ENCODE measurements at regions of chr3 and their contacts with region 1.

Region 1: GRCh38 chr3:100717637-100718487 is 8.6 kb downstream of the TFG start:
- DNase-seq: no peak
- ATAC-seq: no peak
- H3K4me3 Mint-ChIP-seq: no peak overlapping the region
- H3K27ac Mint-ChIP-seq: no peak overlapping the region
- H3K4me1 Mint-ChIP-seq: peaks cover 35% of the 10 kb centered on the region
- H3K27me3 Mint-ChIP-seq: no peaks in the 10 kb centered on the region

Region 2: GRCh38 chr3:100737334-100737733 is 19.5 kb after region 1 on chr3:
- CTCF ChIA-PET with region 1: interaction called, 3 read pairs
- POLR2A ChIA-PET with region 1: no interaction called
- intact Hi-C with region 1: loop called in 1 of 2 experiments (anchors 2 kb)
- DNase-seq: no peak
- ATAC-seq: no peak
- H3K4me3 Mint-ChIP-seq: no peak overlapping the region
- H3K27ac Mint-ChIP-seq: no peak overlapping the region
- H3K4me1 Mint-ChIP-seq: peaks cover 8% of the 10 kb centered on the region
- H3K27me3 Mint-ChIP-seq: no peaks in the 10 kb centered on the region

Region 3: DNA sequence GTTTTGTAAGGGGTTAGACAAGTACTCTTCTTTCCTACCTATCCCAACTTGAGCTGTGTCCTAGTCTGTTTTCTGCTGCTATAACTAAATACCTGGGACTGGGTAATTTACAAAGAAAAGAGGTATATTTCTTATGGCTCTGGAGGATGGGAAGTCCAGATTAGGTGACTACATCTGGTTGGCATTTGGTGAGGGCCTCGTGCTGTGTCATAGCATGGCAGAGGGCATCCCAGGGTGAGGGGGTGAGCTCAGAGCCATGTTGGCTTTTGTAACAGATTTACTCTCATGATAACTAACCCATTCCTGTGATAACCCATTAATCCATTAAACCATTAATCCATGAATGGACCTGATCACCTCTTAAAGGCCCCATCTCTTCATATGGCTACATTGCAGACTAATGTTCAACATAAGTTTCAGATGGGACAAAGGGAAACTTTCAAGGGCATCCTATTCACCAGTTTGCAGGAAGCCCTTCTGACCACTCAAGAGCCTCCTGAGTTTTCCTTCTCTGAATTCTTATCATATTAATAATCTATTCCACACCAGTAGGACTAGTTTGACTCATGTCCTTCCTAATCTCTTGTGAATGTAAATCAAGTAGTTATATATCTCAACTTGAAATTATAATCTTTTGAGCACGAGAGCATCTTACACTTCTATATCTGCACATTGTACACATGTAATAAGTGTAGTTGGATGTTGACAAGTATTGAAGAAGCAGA is 1531.3 kb after region 1 on chr3:
- CTCF ChIA-PET with region 1: no interaction called
- POLR2A ChIA-PET with region 1: no interaction called
- intact Hi-C with region 1: no loop called
- DNase-seq: no peak
- ATAC-seq: no peak
- H3K4me3 Mint-ChIP-seq: no peak overlapping the region
- H3K27ac Mint-ChIP-seq: no peak overlapping the region
- H3K4me1 Mint-ChIP-seq: no peaks in the 10 kb centered on the region
- H3K27me3 Mint-ChIP-seq: peaks cover 14% of the 10 kb centered on the region